Mammary epithelial cell (primary cell): ENCODE measurements at regions of chr3 and their contacts with region 1.

Region 1: GRCh38 chr3:143972505-143973255 is 1.1 kb downstream of the DIPK2A start:
- DNase-seq: peak; percentile 73
- H3K4me3 ChIP-seq: peak overlapping the region; percentile 72 to 93 (median 88)
- H3K27ac ChIP-seq: peak overlapping the region; percentile 91
- H3K4me1 ChIP-seq: peaks cover 9% of the 10 kb centered on the region
- H3K27me3 ChIP-seq: no peaks in the 10 kb centered on the region
- CTCF ChIP-seq: peak in 1 of 2 donors; percentile 67

Region 2: DNA sequence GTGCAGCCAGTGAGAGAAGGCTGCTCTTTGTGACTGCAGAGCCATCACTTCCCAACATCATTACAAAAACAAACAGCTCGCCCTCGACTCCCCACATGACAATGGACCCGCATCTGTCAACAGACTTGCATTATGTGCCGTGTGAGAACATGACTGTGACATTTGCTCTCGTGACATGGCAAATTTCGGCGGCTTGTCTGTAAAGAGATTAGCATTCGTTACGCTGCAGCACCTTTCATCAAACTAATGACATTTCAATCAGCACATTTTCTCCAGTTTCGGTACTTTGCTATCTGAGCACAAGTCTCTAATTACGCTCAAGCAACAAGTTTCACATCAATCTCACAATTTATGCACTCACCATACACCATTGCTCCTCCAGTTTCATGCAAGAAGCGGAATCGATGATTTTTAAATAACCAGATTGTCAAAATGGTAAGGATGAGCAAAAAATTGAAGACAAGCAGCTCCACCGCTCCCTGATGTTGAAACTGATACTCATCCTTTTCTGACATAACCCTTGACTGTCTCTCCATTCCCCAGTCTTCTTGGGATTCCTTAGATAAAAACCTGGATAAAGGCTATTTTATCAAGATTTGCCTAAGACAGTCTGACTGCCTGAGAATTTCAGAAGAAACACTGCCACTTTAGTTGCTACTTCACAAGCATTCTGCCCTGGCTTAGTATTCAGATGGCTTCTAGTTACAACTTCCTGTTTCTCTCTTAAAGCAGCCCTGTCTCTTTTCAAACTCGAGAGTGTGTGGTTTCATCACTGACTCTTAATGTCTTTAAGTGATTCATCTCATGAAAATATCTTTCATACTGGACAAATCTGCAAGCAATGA is 124.7 kb before region 1 on chr3 and contains the start of gene SLC9A9:
- CTCF ChIA-PET with region 1: no interaction called
- dilution Hi-C with region 1: no loop called
- in situ Hi-C with region 1: no loop called
- intact Hi-C with region 1: no loop called
- DNase-seq: peak; percentile 78
- H3K4me3 ChIP-seq: peak within 1 kb of the TSS; percentile 52 to 81 (median 57)
- H3K27ac ChIP-seq: peak within 1 kb of the TSS; percentile 70
- H3K4me1 ChIP-seq: peaks cover 33% of the 10 kb centered on the region
- H3K27me3 ChIP-seq: no peaks in the 10 kb centered on the region
- CTCF ChIP-seq: no peak
- total RNA-seq, gene SLC9A9: 4.3 to 7.8 TPM

Region 3: DNA sequence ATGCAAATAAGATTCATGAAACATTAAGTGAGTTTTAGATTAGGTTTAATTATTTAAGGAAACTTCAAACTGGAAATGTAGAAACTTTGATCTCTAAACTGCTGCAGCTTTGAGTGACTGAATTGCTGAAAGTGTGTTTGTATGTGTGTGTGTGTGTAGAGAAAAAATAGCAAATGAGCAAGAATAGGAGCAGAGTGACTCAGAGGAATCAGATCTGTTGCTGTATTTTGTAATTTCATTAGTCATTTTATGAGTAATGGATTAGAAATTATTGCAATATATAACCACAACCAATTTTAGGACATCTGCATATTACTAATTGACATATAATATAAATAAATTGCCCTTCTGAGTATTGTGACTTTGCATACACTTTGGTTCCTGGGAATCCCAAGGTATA is 71.6 kb before region 1 on chr3:
- CTCF ChIA-PET with region 1: no interaction called
- dilution Hi-C with region 1: no loop called
- in situ Hi-C with region 1: no loop called
- intact Hi-C with region 1: loop called (anchors 1 kb)
- DNase-seq: peak; percentile 86
- H3K4me3 ChIP-seq: no peak overlapping the region
- H3K27ac ChIP-seq: no peak overlapping the region
- H3K4me1 ChIP-seq: peaks cover 16% of the 10 kb centered on the region
- H3K27me3 ChIP-seq: no peaks in the 10 kb centered on the region
- CTCF ChIP-seq: no peak

Region 4: DNA sequence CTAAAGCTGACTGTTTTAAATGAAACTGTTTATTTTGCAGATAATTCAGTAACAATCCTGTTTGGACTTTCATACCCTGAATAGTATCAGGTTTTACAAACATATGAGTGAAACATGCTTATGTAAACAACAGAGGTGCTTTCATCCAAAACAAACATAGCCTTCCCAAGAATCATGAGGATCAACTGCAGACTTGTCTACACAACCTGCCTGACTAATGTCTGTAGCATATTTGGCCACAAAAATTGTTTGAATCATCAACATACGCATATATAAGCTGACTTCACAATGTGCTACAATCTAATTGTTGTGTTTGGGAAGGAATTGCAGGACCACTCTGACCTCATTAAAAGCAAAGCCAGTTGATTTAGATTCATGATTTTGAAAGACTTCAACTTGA is 189.4 kb after region 1 on chr3:
- CTCF ChIA-PET with region 1: no interaction called
- dilution Hi-C with region 1: no loop called
- in situ Hi-C with region 1: no loop called
- intact Hi-C with region 1: loop called (anchors 10 kb)
- DNase-seq: peak; percentile 72
- H3K4me3 ChIP-seq: no peak overlapping the region
- H3K27ac ChIP-seq: no peak overlapping the region
- H3K4me1 ChIP-seq: no peaks in the 10 kb centered on the region
- H3K27me3 ChIP-seq: no peaks in the 10 kb centered on the region
- CTCF ChIP-seq: no peak

Region 5: DNA sequence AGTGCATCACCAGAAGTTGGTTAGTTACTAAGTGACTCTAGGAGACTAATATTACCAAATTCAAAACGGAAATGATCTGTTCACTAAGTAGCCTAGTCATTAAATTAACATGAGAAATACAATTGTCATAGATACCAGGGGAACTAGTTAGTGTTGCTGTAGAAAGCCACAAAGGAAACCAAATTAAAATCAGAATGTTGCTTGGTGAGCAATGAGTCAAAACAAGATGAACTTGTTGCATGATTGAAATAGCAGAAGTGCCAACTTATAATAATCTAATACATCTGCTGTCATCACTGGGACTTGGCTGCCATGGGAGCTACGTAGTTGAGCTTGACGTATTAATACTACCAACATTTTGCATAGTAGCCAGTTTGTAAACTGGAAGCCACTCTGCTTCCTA is 457.0 kb after region 1 on chr3:
- CTCF ChIA-PET with region 1: no interaction called
- dilution Hi-C with region 1: no loop called
- in situ Hi-C with region 1: no loop called
- intact Hi-C with region 1: loop called (anchors 10 kb)
- DNase-seq: peak; percentile 6
- H3K4me3 ChIP-seq: no peak overlapping the region
- H3K27ac ChIP-seq: no peak overlapping the region
- H3K4me1 ChIP-seq: no peaks in the 10 kb centered on the region
- H3K27me3 ChIP-seq: no peaks in the 10 kb centered on the region
- CTCF ChIP-seq: no peak

Region 6: GRCh38 chr3:145767909-145768308 is 1795.2 kb after region 1 on chr3:
- CTCF ChIA-PET with region 1: no interaction called
- dilution Hi-C with region 1: no loop called
- in situ Hi-C with region 1: no loop called
- intact Hi-C with region 1: loop called (anchors 5 kb)
- DNase-seq: no peak
- H3K4me3 ChIP-seq: no peak overlapping the region
- H3K27ac ChIP-seq: no peak overlapping the region
- H3K4me1 ChIP-seq: no peaks in the 10 kb centered on the region
- H3K27me3 ChIP-seq: peaks cover 1% of the 10 kb centered on the region
- CTCF ChIP-seq: peak in 1 of 2 donors; percentile 39